Activated CD4-positive, alpha-beta T cell treated with anti-CD3 and anti-CD28 coated beads, Interleukin-2, amount 10 ng/mL, durations not matched to agents 7 days and 5 days (primary cell): ENCODE measurements at regions of chr1 and their contacts with region 1.

Region 1: DNA sequence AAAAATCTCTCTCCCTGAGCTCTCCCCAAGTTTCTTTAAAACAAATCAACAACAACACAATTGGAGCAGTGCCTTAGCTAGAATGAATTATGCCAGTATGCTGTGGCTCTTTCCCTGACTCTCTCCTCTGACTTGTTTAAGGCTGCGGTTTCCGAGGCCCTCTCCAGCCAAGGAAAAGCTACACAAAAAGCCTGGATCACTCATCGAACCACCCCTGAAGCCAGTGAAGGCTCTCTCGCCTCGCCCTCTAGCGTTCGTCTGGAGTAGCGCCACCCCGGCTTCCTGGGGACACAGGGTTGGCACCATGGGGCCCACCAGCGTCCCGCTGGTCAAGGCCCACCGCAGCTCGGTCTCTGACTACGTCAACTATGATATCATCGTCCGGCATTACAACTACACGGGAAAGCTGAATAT is 1.9 kb downstream of the S1PR1 start:
- DNase-seq: peak; percentile 90
- H3K4me3 Mint-ChIP-seq: peak overlapping the region; percentile 98
- H3K27ac Mint-ChIP-seq: peak overlapping the region; percentile 99
- H3K4me1 Mint-ChIP-seq: peaks cover 54% of the 10 kb centered on the region
- H3K27me3 Mint-ChIP-seq: no peaks in the 10 kb centered on the region

Region 2: GRCh38 chr1:100972185-100972584 is 266.5 kb before region 1 on chr1:
- CTCF ChIA-PET with region 1: no interaction called
- POLR2A ChIA-PET with region 1: no interaction called
- DNase-seq: no peak
- H3K4me3 Mint-ChIP-seq: no peak overlapping the region
- H3K27ac Mint-ChIP-seq: no peak overlapping the region
- H3K4me1 Mint-ChIP-seq: peaks cover 16% of the 10 kb centered on the region
- H3K27me3 Mint-ChIP-seq: no peaks in the 10 kb centered on the region

Region 3: GRCh38 chr1:101115112-101115511 is 123.6 kb before region 1 on chr1:
- CTCF ChIA-PET with region 1: no interaction called
- POLR2A ChIA-PET with region 1: no interaction called
- DNase-seq: no peak
- H3K4me3 Mint-ChIP-seq: no peak overlapping the region
- H3K27ac Mint-ChIP-seq: no peak overlapping the region
- H3K4me1 Mint-ChIP-seq: peaks cover 61% of the 10 kb centered on the region
- H3K27me3 Mint-ChIP-seq: peaks cover 2% of the 10 kb centered on the region

Region 4: GRCh38 chr1:101137144-101138126 is 101.3 kb before region 1 on chr1:
- CTCF ChIA-PET with region 1: interaction called, 19 read pairs
- POLR2A ChIA-PET with region 1: interaction called, 5 read pairs
- DNase-seq: no peak
- H3K4me3 Mint-ChIP-seq: peak overlapping the region; percentile 18
- H3K27ac Mint-ChIP-seq: peak overlapping the region; percentile 83
- H3K4me1 Mint-ChIP-seq: peaks cover 64% of the 10 kb centered on the region
- H3K27me3 Mint-ChIP-seq: no peaks in the 10 kb centered on the region

Region 5: DNA sequence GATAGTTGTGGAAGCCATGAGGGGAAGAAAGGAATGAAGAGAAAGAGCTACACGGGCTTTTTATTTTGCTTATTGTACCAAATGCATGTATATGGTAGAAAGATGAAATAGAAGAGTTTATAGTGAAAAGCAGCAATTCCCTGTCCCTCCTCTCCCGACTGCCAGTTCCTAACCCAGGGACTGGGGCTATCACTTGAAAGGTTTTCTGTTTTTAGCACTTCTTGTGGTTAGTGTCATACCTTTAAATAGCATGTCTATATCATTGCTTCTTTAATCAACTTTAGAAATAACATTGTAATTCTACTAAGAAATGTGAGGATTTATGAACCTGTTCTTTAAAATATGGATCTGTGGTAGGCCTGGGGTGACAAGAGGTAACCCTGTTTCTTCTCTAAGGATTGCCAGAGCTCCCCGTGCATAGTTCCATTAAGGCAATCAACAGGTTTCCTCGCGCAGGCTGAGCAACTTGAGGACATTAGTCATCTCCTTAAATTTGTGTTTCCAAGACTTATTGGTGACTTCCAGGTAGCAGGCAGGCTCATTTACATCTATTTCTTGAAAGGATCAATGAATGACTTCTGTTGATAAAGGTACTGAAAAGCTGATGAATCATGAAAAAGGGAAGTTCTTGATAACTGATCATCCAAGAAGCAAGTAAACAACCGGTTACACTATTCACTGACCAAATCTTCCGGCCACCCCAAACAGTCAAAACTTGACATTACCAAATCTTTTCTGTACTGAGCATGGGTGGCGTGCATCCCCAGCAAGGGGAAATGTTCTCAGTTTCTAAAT is 39.6 kb before region 1 on chr1:
- CTCF ChIA-PET with region 1: interaction called, 11 read pairs
- POLR2A ChIA-PET with region 1: interaction called, 6 read pairs
- DNase-seq: no peak
- H3K4me3 Mint-ChIP-seq: no peak overlapping the region
- H3K27ac Mint-ChIP-seq: peak overlapping the region; percentile 68
- H3K4me1 Mint-ChIP-seq: peaks cover 24% of the 10 kb centered on the region
- H3K27me3 Mint-ChIP-seq: no peaks in the 10 kb centered on the region

Region 6: DNA sequence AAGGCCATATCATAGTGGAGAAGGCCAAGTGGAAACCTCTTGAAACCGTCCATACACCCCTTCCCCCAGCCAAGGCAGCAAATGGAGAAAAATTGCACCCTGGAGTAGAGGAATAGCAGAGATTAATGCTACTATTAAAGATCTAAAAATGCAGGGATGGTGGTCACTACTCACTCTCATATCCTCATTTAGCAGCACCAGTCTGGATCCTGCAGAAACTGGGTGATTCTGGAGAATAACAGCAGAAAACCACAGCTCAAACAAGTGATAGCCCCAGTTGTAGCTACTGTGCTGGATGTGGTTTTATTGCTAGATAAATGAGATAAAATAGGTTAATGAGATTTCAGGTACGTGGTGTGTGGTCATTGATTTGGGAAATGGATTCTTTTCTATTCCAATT is 28.4 kb after region 1 on chr1:
- CTCF ChIA-PET with region 1: interaction called, 23 read pairs
- POLR2A ChIA-PET with region 1: interaction called, 3 read pairs
- DNase-seq: no peak
- H3K4me3 Mint-ChIP-seq: no peak overlapping the region
- H3K27ac Mint-ChIP-seq: no peak overlapping the region
- H3K4me1 Mint-ChIP-seq: peaks cover 55% of the 10 kb centered on the region
- H3K27me3 Mint-ChIP-seq: no peaks in the 10 kb centered on the region

Region 7: DNA sequence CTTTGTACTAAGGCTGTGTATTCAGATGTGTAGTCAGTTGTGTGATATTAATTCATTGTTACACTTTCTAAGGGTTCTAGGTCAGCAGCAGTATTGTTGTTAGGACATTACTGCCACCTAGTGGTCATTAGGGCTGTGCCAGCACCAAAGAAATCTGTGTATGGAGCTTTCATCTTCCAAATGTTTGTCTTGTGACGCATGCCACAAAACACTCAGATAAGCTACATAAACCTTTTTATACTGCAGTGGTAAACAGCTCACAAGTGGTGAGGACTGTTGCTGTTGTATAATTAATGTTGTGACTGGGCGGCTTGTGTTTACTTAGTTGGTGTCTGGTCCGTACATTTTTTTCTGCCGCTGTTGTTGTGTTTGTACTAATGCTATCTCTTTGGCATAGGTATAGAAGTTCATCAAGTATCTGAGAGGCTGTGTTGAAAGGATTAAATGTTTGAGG is 49.8 kb after region 1 on chr1:
- CTCF ChIA-PET with region 1: interaction called, 52 read pairs
- POLR2A ChIA-PET with region 1: interaction called, 4 read pairs
- DNase-seq: peak; percentile 81
- H3K4me3 Mint-ChIP-seq: peak overlapping the region; percentile 12
- H3K27ac Mint-ChIP-seq: peak overlapping the region; percentile 63
- H3K4me1 Mint-ChIP-seq: peaks cover 94% of the 10 kb centered on the region
- H3K27me3 Mint-ChIP-seq: no peaks in the 10 kb centered on the region

Region 8: GRCh38 chr1:101420406-101420805 is 181.7 kb after region 1 on chr1:
- CTCF ChIA-PET with region 1: no interaction called
- POLR2A ChIA-PET with region 1: no interaction called
- DNase-seq: no peak
- H3K4me3 Mint-ChIP-seq: no peak overlapping the region
- H3K27ac Mint-ChIP-seq: no peak overlapping the region
- H3K4me1 Mint-ChIP-seq: no peaks in the 10 kb centered on the region
- H3K27me3 Mint-ChIP-seq: peaks cover 2% of the 10 kb centered on the region